ENCODE measurements at regions of chr7 and their contacts with region 1.

Region 1: DNA sequence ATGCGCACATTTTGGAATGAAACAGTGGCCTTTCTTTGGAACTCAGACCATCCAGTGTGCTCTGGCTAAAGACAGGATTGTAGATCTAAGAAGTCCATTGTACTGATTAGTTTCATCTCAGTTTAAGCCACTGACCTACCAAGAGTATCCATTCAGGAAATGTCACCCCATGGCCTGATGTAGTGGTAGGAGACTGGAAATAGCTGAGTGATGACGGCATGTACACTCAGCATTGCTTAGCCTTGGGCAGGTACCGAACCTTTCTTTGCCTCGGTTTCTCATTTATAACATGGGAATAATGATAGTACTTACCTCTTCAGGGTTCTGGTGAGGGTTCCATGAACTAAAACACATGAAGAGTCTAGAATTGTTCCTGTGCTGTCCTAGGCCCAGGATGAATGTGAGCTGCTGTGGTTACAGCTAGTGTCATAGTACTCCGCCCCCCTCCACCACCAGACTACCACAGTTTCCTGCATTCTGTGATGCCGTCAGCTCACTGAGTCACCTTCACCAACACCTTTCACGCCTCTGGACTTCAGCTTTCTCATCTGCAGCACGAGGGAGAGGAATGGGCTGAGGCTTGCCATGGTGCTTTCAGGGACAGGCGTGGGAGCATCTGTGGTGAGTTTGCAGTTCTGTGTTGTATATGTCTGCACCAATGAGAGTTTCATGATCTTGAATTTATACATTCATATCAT is 484.0 kb upstream of the GALNT17 start:
- DNase-seq: peak; percentile 91
- ATAC-seq: peak; percentile 94
- H3K4me3 Mint-ChIP-seq: no peak overlapping the region
- H3K27ac Mint-ChIP-seq: no peak overlapping the region
- H3K4me1 Mint-ChIP-seq: peaks cover 22% of the 10 kb centered on the region
- H3K27me3 Mint-ChIP-seq: peaks cover 14% of the 10 kb centered on the region

Region 2: DNA sequence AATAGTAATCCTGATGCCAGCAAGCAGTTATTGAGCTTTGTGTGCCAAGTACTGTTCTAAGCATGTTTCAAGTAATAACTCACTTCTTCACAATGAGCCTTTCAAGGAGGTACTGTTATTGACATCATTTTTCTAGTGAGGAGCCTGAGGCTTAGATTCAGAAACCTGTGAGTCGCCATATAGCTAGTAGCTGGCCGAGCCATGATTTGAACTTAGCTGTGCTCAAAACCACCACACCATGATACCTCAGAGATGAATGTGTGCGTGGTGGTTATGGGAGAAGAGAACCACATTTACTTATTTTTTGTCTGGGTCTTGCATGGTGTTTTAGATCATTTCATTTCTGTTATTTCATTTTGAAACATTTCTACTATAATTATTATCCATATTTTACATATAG is 470.8 kb before region 1 on chr7:
- CTCF ChIA-PET with region 1: no interaction called
- POLR2A ChIA-PET with region 1: no interaction called
- intact Hi-C with region 1: loop called in 1 of 2 experiments (anchors 1 kb)
- DNase-seq: peak; percentile 35
- ATAC-seq: peak; percentile 75
- H3K4me3 Mint-ChIP-seq: no peak overlapping the region
- H3K27ac Mint-ChIP-seq: no peak overlapping the region
- H3K4me1 Mint-ChIP-seq: peaks cover 9% of the 10 kb centered on the region
- H3K27me3 Mint-ChIP-seq: peaks cover 2% of the 10 kb centered on the region

Region 3: GRCh38 chr7:70678621-70679251 is 30.8 kb after region 1 on chr7:
- CTCF ChIA-PET with region 1: no interaction called
- POLR2A ChIA-PET with region 1: no interaction called
- intact Hi-C with region 1: loop called (anchors 1 kb)
- DNase-seq: peak; percentile 35
- ATAC-seq: peak; percentile 25
- H3K4me3 Mint-ChIP-seq: no peak overlapping the region
- H3K27ac Mint-ChIP-seq: peak overlapping the region; percentile 20
- H3K4me1 Mint-ChIP-seq: peaks cover 40% of the 10 kb centered on the region
- H3K27me3 Mint-ChIP-seq: peaks cover 15% of the 10 kb centered on the region

Region 4: GRCh38 chr7:70728872-70729552 is 81.1 kb after region 1 on chr7:
- CTCF ChIA-PET with region 1: no interaction called
- POLR2A ChIA-PET with region 1: no interaction called
- intact Hi-C with region 1: no loop called
- DNase-seq: no peak
- ATAC-seq: no peak
- H3K4me3 Mint-ChIP-seq: no peak overlapping the region
- H3K27ac Mint-ChIP-seq: no peak overlapping the region
- H3K4me1 Mint-ChIP-seq: peaks cover 2% of the 10 kb centered on the region
- H3K27me3 Mint-ChIP-seq: no peaks in the 10 kb centered on the region